Activated B cell treated with CpG ODN at 0.5 μM for 24 hours (primary cell): ENCODE measurements at regions of chr9 and their contacts with region 1.

Region 1: GRCh38 chr9:133485361-133486260 is 6.7 kb upstream of the SLC2A6 start:
- DNase-seq: no peak
- ATAC-seq: peak; percentile 67
- H3K4me3 Mint-ChIP-seq: peak overlapping the region; percentile 56
- H3K27ac Mint-ChIP-seq: no peak overlapping the region
- H3K4me1 Mint-ChIP-seq: peaks cover 5% of the 10 kb centered on the region
- H3K27me3 Mint-ChIP-seq: peaks cover 1% of the 10 kb centered on the region
- CTCF ChIP-seq: no peak

Region 2: DNA sequence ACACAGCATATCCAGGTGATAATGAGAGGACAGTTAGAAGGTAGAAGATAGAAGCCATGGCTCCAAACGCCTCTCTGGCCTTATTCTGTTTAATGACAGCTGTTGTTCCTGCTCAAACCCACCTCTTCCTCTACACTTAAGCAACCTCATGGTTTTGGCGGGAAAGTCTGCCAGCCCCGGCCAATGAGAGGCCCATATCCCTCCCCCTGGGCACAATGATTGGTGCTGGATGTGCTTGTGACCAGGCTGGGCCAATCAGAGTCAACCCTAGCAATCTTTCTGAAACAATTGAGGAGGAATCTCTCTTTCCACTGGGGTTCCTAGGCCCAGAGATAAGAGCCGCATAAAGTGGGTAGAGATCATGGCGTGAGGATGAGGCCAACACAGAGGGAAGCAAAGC is 511.9 kb before region 1 on chr9:
- CTCF ChIA-PET with region 1: no interaction called
- POLR2A ChIA-PET with region 1: no interaction called
- intact Hi-C with region 1: loop called (anchors 5 kb)
- DNase-seq: no peak
- ATAC-seq: no peak
- H3K4me3 Mint-ChIP-seq: no peak overlapping the region
- H3K27ac Mint-ChIP-seq: no peak overlapping the region
- H3K4me1 Mint-ChIP-seq: peaks cover 13% of the 10 kb centered on the region
- H3K27me3 Mint-ChIP-seq: peaks cover 18% of the 10 kb centered on the region
- CTCF ChIP-seq: no peak

Region 3: DNA sequence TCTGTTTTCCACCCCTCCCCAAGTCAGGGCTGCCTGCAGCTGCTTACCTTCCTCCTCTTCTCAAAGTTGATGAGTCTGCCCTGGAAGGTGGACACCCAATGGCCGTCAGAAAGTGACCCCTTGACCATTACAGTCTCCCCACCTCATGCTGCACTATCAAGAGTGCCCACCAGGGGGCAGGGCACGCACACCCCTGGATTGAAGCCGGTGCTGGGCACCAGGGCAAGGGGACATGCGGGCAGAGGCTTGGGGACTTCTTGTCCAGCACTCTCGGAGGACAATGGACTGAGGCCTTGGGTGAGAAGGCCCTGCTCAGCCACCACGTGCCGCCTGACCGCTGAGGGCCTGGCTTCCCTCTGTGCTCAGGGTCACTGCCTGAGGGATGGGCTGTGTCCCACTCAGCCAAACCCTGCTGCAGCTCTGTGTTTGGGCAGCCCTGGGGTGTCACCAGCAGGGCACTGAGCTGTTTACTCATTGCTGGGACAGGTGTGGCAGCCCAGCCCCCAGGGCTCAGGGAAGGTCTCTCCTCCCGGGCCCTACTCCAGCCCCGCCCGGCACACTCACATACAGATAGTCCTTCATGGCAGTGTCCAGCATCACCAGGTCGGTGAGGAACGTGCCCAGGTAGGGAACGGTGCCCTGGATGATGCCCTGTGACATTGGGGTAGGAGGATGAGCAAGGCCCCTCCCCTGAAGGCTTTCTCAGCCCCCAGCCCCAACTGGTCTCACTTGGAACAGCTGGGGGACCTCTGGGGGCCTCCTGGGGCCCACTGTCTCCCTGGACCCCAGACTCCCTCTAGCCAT is 382.2 kb before region 1 on chr9:
- CTCF ChIA-PET with region 1: interaction called, 3 read pairs
- POLR2A ChIA-PET with region 1: no interaction called
- intact Hi-C with region 1: loop called (anchors 5 kb)
- DNase-seq: peak; percentile 69
- ATAC-seq: peak; percentile 90
- H3K4me3 Mint-ChIP-seq: no peak overlapping the region
- H3K27ac Mint-ChIP-seq: no peak overlapping the region
- H3K4me1 Mint-ChIP-seq: no peaks in the 10 kb centered on the region
- H3K27me3 Mint-ChIP-seq: no peaks in the 10 kb centered on the region
- CTCF ChIP-seq: peak; percentile 71

Region 4: GRCh38 chr9:133238851-133239532 is 246.6 kb before region 1 on chr9:
- CTCF ChIA-PET with region 1: interaction called, 4 read pairs
- POLR2A ChIA-PET with region 1: no interaction called
- intact Hi-C with region 1: loop called (anchors 2 kb)
- DNase-seq: peak; percentile 30
- ATAC-seq: peak; percentile 57
- H3K4me3 Mint-ChIP-seq: peak overlapping the region; percentile 52
- H3K27ac Mint-ChIP-seq: no peak overlapping the region
- H3K4me1 Mint-ChIP-seq: peaks cover 10% of the 10 kb centered on the region
- H3K27me3 Mint-ChIP-seq: peaks cover 30% of the 10 kb centered on the region
- CTCF ChIP-seq: no peak

Region 5: DNA sequence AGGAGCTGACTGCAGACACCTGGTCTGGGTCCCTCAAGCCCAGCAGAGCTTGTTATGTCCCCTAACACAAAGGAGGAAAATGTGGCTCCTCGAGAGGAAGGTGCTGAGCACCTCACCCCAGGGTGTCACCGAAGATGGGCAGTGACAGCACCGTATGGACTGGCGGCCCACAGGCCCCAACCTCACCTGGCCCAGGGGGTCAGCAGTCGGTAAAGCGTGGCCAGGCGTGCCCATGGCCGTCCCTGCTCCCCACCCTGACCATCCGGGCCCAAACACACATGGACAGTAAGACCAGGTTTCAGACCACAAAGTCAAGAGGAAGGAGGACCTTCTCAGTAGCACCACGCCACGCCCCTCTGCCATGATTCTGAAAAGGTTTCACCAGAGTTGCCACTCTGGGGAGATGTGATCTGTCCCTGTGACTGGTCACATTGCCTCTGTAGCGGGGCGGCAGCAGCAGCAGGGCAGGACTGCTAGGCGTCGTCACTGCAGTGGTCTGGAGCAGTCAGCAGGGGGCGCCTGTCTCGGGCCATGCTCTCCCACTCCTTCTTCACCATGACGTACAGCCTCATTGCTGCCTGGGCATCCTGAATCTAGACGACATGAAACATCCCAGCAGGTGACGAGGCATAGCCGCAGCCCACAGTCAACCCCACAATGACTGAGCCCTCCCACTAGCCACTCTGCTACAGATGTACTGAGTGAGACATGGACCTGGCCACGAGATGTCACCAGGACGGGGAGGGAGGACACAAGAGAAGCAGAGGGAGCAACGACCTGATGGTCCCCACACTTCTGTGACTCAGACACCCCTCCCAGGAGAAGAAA is 78.9 kb before region 1 on chr9:
- CTCF ChIA-PET with region 1: interaction called, 6 read pairs
- POLR2A ChIA-PET with region 1: no interaction called
- intact Hi-C with region 1: loop called (anchors 1 kb)
- DNase-seq: peak; percentile 71
- ATAC-seq: peak; percentile 95
- H3K4me3 Mint-ChIP-seq: no peak overlapping the region
- H3K27ac Mint-ChIP-seq: peak overlapping the region; percentile 61
- H3K4me1 Mint-ChIP-seq: peaks cover 6% of the 10 kb centered on the region
- H3K27me3 Mint-ChIP-seq: no peaks in the 10 kb centered on the region
- CTCF ChIP-seq: peak; percentile 56

Region 6: DNA sequence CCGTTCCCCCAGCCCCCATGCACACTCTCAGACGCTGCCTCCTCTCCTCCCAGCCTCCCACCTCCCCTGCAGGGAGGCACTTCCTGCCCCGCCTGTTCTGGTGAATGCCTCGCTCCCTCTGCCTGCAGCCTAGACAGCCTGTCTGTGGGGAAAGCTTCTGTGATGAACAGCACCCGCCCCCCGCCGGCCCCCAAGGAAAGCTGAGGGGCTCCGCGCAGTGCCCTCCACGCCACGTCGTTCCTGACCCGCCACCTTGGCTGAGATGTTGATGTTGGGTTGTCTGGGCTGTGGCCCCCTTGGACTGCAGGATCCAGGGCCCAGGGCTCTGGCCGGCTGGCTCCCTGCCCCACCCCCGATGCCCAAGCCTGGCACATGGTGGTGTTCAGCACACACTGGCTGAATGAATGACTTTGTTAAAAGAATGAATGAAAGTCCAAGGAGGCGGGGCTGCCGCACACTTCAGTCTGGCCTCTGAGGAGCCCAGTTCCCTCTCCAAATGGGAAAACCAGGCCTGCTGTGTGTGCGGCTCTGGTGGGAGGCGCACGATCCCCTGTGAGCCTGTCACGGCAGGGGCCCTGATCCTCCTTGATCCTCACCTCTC is 41.2 kb after region 1 on chr9:
- CTCF ChIA-PET with region 1: no interaction called
- POLR2A ChIA-PET with region 1: no interaction called
- intact Hi-C with region 1: no loop called
- DNase-seq: no peak
- ATAC-seq: no peak
- H3K4me3 Mint-ChIP-seq: no peak overlapping the region
- H3K27ac Mint-ChIP-seq: no peak overlapping the region
- H3K4me1 Mint-ChIP-seq: no peaks in the 10 kb centered on the region
- H3K27me3 Mint-ChIP-seq: peaks cover 15% of the 10 kb centered on the region
- CTCF ChIP-seq: no peak